ENCODE measurements at regions of chr3 and their contacts with region 1.

Region 1: GRCh38 chr3:129016356-129016719 is 15.2 kb downstream of the EFCC1 start:
- DNase-seq: no peak
- ATAC-seq: peak; percentile 49
- H3K4me3 Mint-ChIP-seq: no peak overlapping the region
- H3K27ac Mint-ChIP-seq: no peak overlapping the region
- H3K4me1 Mint-ChIP-seq: peaks cover 7% of the 10 kb centered on the region
- H3K27me3 Mint-ChIP-seq: no peaks in the 10 kb centered on the region; the same call in 1 of the 2 replicates
- CTCF ChIP-seq: no peak

Region 2: DNA sequence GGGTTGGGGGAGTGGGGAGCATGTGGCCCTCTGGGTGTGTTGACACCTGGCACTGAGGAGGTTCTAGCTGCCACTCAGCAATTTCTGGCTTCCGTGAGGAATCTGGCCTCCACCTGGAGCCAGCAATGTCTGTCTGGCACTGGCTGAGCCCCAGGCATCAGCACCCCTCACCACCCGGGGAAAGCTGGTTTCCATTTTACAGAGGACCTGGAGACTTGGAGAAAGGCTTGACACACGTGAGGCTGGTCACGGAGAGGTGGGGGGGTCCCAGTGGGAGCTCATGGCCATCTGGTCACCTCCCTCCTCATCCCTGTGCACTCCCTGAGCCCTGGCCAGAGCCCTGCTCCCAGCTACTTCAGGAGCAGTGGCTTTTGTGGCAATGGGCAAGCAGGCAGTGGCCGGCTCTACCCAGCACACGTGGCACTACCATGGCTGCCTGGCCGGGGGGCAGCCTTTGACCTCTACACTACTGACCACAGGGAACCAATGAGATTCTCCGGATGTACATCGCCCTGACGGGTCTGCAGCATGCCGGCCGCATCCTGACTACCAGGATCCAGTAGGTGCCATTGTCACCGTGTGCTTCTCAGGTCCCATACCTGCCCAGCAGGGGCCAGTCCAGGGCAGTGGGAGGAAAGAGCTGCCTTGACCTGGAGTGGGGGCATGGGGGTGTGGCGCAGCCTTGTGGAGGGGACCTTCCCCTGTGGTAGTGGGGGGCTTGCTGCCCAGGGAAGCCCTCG is 108.5 kb before region 1 on chr3:
- CTCF ChIA-PET with region 1: no interaction called
- POLR2A ChIA-PET with region 1: no interaction called
- DNase-seq: no peak
- ATAC-seq: no peak
- H3K4me3 Mint-ChIP-seq: no peak overlapping the region
- H3K27ac Mint-ChIP-seq: no peak overlapping the region
- H3K4me1 Mint-ChIP-seq: no peaks in the 10 kb centered on the region
- H3K27me3 Mint-ChIP-seq: no peaks in the 10 kb centered on the region
- CTCF ChIP-seq: no peak

Region 3: DNA sequence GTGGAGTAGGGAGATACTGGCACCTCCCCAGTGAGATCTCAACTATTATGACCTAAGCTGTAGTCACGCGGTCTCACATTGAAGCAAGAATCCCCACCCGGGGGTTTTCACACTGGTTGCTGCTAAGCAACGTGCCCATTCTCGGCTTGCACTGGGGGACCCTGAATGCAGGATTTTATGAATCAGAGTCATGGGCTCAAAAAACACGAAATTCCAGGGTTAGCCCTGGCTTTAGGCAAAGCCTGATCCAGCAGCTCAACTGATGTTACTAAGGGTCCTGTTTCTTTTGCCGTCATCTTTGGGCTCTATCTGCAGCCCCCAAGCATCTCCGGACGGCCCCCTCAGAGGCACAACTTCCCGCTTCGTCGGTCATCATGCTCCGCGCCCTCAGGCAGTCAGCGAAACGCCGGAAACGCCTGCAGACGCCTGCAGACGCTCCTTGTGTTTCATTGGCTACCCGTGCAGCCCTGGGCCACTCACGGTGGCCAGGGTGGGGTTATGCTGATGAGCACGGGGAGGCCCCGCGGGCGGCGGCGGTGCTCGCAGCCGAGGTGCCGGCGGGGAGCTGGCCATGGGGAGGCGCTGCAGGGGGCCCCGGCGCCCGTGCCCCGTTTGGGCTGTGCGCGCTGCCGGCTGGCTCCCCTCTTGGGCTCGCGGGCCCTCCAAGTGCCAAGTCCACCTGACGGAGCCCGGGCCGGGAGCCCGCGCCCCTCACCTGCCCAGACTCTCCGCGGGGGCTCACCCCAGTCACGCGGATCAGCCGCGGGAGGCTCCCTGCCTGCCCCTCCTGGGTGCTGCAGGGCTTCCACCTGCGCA is 10.6 kb after region 1 on chr3:
- CTCF ChIA-PET with region 1: interaction called, 12 read pairs
- POLR2A ChIA-PET with region 1: no interaction called
- DNase-seq: peak; percentile 81
- ATAC-seq: peak; percentile 97
- H3K4me3 Mint-ChIP-seq: peak overlapping the region; percentile 46
- H3K27ac Mint-ChIP-seq: no peak overlapping the region
- H3K4me1 Mint-ChIP-seq: peaks cover 5% of the 10 kb centered on the region; the same call in 1 of the 2 replicates
- H3K27me3 Mint-ChIP-seq: peaks cover 53% of the 10 kb centered on the region
- CTCF ChIP-seq: no peak

Region 4: GRCh38 chr3:129045675-129046036 is 29.3 kb after region 1 on chr3:
- CTCF ChIA-PET with region 1: interaction called, 10 read pairs
- POLR2A ChIA-PET with region 1: no interaction called
- DNase-seq: peak; percentile 71
- ATAC-seq: peak; percentile 74
- H3K4me3 Mint-ChIP-seq: peak overlapping the region; percentile 52
- H3K27ac Mint-ChIP-seq: no peak overlapping the region
- H3K4me1 Mint-ChIP-seq: peaks cover 14% of the 10 kb centered on the region
- H3K27me3 Mint-ChIP-seq: peaks cover 46% of the 10 kb centered on the region
- CTCF ChIP-seq: no peak

Region 5: GRCh38 chr3:129058441-129059200 is 42.3 kb after region 1 on chr3:
- CTCF ChIA-PET with region 1: interaction called, 12 read pairs
- POLR2A ChIA-PET with region 1: no interaction called
- DNase-seq: no peak
- ATAC-seq: no peak
- H3K4me3 Mint-ChIP-seq: no peak overlapping the region
- H3K27ac Mint-ChIP-seq: no peak overlapping the region
- H3K4me1 Mint-ChIP-seq: no peaks in the 10 kb centered on the region
- H3K27me3 Mint-ChIP-seq: peaks cover 5% of the 10 kb centered on the region
- CTCF ChIP-seq: no peak

Region 6: GRCh38 chr3:129121792-129122411 is 105.6 kb after region 1 on chr3 and contains the start of gene RAB43:
- CTCF ChIA-PET with region 1: no interaction called
- POLR2A ChIA-PET with region 1: no interaction called
- DNase-seq: peak; percentile 99
- ATAC-seq: peak; percentile 91
- H3K4me3 Mint-ChIP-seq: peak within 1 kb of the TSS; percentile 83
- H3K27ac Mint-ChIP-seq: peak within 1 kb of the TSS; percentile 99
- H3K4me1 Mint-ChIP-seq: peaks cover 45% of the 10 kb centered on the region
- H3K27me3 Mint-ChIP-seq: peaks cover 4% of the 10 kb centered on the region; the same call in 1 of the 2 replicates
- CTCF ChIP-seq: no peak
- total RNA-seq, gene RAB43: 20.2 to 34.5 TPM (median 21.0 TPM) in 3 replicates

Measured in WTC11 (cell line).